ENCODE measurements at regions of chr7 and their contacts with region 1.

Region 1: DNA sequence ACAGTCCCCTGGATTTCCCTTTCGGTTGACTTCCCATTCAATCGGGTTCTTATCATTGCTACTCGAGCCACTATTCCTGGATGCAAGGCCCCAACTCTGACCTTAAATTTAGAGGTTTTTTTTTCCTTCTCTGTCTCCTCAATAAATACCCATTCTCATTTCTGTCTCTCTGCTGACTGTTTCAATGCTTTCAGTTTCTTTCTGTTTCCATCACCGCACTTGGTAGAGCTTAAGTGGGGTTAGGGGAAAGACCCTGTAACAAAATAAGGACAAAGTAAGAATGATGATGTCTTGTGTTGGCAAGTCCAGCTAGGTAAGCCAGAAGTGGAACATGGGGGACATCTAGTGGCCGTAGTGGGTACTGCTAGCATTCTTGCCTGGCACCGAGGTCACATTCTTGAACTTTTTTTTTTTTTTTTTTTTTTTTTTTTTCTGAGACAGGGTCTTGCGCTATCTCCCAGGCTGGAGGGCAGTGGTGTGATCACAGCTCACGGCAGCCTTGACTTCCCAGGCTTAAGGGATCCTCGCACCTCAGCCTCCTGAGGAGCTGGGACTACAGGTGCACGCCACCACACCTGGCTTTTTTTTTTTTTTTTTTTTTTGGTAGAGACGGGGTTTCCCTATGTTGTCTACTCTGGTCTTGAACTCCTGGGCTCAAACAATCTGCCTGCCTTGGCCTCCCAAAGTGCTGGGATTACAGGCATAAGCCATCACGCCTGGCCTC is 40.3 kb downstream of the ZC3HC1 start:
- DNase-seq: peak; percentile 95

Region 2: DNA sequence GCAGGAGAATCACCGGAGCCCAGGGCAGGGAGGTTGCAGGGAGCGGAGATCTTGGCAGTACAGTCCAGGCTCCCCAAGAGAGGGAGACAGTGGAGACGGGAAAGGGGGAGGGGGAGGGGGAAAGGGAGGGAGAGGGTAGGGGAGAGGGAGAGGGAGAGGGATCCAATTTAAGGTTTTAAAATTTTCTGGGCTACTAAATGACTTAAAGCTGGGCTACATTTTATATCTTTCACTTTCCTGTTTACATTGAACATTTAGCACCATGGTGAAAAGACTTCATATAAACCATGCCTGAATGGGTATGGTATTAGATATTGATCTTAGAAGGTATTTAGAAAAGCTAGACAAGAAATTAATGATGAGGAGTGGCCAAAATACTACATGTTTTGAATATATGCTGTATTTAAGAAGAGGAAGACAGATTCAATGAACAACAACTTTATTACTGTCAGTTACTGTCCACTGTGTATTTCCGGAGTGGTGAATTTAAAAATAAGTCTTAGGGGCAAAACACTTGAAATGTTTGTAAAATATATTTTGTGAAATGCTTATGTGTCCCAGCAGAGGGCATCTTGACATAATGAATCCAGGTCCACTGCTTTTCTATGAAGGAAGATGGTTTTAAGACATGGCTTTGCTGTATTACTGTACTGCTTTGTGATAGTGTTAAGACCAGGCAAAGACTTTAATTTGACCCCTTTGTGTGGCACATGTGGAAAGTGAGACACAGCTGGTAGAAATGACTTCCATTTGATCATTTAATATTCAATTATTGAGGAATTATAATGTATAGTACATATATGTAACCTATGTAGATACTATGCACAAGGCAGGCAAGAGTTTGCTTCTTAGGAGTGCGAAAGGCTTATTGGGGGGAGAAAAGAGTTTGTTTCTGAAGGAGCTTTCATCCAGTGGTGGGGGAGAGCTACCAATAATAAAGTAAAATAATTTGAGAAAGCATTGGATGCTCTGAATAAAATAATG is 346.5 kb before region 1 on chr7:
- in situ Hi-C with region 1: loop called (anchors 25 kb)
- DNase-seq: peak; percentile 74

Region 3: DNA sequence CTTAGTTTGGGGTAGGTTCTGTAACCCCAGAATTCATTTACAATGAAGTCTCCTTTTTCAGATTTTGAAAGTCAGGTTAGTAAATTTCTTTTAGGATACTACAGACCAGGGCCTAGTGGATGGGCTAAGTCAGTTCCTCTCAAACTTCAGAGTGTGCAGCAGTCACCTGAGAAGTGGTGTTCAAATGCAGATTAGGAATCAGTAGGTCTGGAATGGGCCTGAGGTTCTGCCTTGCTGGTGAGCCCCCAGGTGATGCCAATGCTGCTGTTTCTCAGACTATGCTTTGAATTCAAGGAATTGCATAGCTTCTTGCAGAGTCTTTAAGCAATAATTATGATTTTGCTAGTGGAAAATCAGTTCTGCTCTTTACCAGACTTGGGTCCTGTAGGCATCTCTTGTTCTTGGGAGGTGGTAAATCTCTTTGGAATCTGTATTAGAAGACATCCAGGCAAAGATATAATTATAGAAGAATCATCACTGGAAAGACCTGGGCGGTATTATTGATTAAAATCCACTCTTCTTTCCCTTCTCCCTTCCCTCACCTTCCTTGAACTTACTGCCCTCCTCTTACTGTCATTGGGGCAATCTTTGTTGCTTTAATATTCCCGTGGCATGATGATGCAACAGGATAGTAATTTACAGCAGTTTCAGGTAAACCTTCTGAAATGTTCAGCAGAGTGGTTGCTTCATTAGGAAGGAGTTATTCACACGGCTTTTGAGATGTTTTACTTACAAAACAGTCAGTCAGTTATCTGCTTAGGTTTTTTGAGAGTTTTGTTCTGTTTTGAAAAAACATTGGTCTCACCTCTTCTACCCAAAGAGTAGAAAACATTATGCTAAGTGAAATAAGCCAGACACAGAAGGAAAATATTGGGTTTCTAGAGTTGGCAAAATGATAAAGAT is 312.1 kb before region 1 on chr7:
- in situ Hi-C with region 1: no loop called
- DNase-seq: no peak

Region 4: DNA sequence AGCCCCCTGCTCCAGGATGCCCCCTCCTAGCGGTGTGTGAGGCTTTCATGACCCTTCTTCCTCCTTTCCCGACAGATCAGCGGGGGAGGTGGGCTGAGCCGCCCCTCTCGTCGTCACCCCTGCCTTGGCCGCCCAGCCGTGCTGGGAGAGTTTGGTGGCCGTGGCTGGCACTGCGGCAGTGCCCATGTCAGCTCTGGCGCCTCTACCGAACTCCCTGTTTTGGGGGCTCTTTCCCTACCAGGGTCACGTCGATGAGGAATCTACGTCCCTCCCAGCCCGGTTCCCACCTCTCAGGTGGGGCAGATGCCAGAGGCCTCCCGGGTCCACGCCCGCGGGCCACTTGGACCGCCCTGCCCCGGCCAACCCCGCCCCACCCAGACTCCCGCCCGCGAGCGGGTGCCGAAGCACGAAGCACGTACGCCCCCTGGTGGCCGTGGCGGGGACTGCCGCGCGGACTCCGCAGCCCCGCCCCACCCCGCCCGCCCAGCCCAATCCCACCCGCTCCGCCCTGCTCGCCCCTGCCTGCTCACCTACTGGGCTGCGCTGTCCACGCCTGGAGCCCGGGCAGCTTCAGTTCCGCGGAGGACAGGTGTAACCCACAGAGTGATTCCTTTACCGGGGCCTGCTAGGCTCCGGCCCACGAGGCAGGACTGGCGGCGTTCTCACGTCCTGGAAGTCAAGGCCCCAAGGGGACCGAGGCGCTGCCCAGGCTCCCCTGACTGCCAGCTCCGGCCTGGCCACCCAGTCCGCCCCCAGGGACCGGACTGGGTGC is 185.2 kb before region 1 on chr7:
- in situ Hi-C with region 1: loop called (anchors 25 kb)
- DNase-seq: peak; percentile 81

Measured in KBM-7 (cell line).